ENCODE measurements at regions of chr9 and their contacts with region 1.

Region 1: GRCh38 chr9:34546834-34547827 is 24.3 kb upstream of the ENHO start:
- DNase-seq: peak in 2 of 5 donors; percentile 42 to 65
- H3K4me3 ChIP-seq: no peak overlapping the region
- H3K27ac ChIP-seq: no peak overlapping the region
- H3K4me1 ChIP-seq: no peaks in the 10 kb centered on the region
- H3K27me3 ChIP-seq: no peaks in the 10 kb centered on the region
- CTCF ChIP-seq: peak in 1 of 3 donors; percentile 35
- EP300 ChIP-seq: no peak
- POLR2A ChIP-seq: no peak

Region 2: GRCh38 chr9:34591248-34591916 is 44.3 kb after region 1 on chr9:
- intact Hi-C with region 1: loop called (anchors 2 to 5 kb)
- DNase-seq: peak; percentile 75 to 93 (median 88)
- H3K4me3 ChIP-seq: no peak overlapping the region
- H3K27ac ChIP-seq: no peak overlapping the region
- H3K4me1 ChIP-seq: peaks cover 3% of the 10 kb centered on the region
- H3K27me3 ChIP-seq: no peaks in the 10 kb centered on the region
- CTCF ChIP-seq: peak; percentile 81 to 93 (median 90)
- EP300 ChIP-seq: no peak
- POLR2A ChIP-seq: no peak

Region 3: DNA sequence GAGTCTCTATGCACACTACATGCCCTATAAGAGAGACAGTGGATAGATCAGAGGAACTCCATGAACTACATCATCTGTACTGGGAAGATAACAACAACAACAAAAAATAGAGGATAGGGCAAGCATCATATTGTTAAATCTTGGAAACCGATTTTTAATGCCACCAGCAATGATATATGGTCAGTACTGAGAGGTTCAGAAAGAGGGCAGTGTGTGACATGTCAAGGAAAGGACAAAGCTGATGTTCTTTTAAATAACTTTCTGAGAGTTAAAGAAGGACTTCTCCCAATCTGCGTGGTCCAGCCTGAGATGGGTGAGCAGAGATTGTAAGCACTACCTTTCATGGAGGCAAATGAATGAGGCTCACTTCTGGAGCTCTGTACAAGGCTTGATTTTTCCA is 349.0 kb after region 1 on chr9:
- intact Hi-C with region 1: no loop called
- DNase-seq: no peak
- H3K4me3 ChIP-seq: no peak overlapping the region
- H3K27ac ChIP-seq: no peak overlapping the region
- H3K4me1 ChIP-seq: no peaks in the 10 kb centered on the region
- H3K27me3 ChIP-seq: no peaks in the 10 kb centered on the region
- CTCF ChIP-seq: no peak
- EP300 ChIP-seq: no peak
- POLR2A ChIP-seq: no peak

Measured in ovary (tissue), 10 donors.